GM23248 (cell line): ENCODE measurements at regions of chr1 and their contacts with region 1.

Region 1: DNA sequence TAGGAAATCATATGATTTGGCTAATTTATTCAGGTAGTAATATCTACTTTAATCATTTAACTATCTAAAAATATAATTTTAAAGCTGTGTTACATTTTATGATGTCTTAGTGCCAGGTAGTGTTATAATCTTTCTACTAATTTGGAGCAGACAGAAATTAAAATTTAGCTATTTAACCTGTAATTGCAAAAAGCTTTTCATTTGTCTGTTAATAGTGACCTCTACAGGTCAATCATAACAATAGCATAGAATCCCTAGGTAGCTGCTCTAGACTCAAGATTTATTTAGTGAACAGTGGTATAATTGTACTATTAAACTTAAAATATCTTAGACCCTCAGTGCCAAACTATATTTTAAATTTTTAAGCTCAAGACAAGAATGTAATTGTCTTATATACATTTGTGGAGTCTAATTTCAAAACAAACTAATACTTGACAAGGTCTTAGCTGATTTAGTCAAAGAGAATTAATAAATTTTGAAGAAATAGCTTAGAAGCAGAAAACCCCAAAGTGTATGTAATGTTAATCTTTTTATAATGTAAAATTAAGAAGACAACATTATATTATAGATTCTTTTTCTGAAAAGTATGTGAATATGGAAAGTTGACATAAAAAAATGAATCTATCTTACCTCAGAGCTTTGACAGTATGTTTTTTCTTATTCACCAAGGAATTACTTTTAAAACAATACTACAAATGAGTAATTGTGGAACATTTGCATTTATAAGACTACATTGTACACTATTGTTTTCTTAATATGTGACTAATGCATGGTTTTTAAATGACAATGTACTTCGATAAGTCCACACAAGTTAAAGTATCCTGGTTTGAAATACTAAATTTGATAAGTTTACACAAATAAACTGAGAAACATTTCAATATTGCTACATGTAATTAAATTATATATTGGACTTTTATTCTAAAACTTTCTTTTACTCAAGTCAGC is 64.1 kb upstream of the RNPC3 start:
- DNase-seq: peak; percentile 48
- H3K4me3 ChIP-seq: no peak overlapping the region
- H3K27ac ChIP-seq: no peak overlapping the region
- H3K4me1 ChIP-seq: no peaks in the 10 kb centered on the region
- H3K27me3 ChIP-seq: no peaks in the 10 kb centered on the region

Region 2: DNA sequence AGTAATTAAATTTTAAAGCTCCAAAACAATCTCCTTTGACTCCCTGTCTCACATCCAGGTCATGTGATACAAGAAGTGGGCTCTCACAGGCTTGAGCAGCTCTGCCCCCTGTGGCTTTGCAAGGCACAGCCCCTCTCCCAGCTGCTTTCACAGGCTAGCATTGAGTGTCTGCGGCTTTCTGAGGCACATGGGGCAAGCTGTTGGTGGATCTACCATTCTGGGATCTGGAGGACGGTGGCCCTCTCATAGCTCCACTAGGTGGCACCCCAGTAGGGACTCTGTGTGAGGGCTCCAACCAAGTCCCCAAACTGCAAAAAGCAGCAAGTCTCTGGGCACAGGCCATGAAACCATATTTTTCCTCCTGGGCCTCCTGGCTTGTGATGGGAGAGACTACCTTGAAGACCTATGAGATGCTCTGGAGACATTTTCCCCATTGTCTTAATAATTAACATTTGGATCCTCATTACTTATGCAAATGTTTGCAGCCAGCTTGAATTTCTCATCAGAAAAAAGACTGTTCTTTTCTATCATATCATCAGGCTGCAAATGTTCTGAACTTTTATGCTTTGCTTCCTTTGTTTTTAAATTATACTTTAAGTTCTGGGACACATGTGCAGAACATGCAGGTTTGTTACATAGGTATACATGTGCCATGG is 910.6 kb before region 1 on chr1:
- in situ Hi-C with region 1: loop called (anchors 25 kb)
- DNase-seq: peak; percentile 62
- H3K4me3 ChIP-seq: no peak overlapping the region
- H3K27ac ChIP-seq: no peak overlapping the region
- H3K4me1 ChIP-seq: no peaks in the 10 kb centered on the region
- H3K27me3 ChIP-seq: no peaks in the 10 kb centered on the region

Region 3: DNA sequence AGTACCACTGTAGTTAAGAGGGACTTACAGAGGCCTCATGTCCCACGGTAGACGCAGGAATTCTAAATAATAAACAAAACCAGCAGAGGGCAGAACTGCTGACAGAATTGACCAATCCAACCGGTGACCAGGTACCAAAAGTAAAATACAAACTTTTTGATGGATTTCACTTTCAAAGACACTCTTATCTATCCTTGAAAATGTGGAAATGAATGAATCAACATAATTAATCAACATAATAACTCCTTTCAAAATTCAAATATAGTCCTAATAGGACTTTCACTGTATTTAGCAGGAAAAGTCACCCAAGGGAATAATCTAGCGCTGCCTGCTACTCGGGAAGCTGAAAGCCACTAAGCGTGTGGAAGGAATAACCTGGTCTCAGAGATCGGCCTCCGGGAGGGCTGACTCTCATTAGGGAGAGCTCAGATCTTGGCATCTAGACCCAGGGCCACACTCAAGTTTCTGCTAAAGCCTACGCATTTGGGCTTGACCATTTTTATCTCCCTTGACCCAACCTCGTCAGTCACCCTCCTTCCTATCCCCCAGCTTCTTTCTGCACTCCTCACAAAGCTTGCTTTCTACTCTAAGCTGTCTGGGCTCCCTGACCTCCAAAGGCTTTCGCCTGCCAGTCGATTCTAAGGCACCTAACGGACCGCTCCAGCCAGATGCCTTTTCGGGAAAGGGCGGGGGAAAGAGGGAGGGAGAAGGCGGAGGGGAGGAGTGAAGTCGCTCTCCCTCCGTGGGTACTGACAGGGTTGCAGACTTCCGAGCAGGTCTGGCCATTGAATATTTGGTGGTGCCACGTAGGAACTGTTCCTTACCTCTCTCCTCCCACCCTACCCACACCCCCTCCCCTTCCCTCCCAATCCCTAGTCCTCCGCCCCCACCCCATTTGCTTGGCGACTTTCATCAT is 354.7 kb before region 1 on chr1:
- in situ Hi-C with region 1: loop called (anchors 25 kb)
- DNase-seq: peak; percentile 65
- H3K4me3 ChIP-seq: peak overlapping the region; percentile 70
- H3K27ac ChIP-seq: no peak overlapping the region
- H3K4me1 ChIP-seq: peaks cover 5% of the 10 kb centered on the region; the same call in 1 of the 2 replicates
- H3K27me3 ChIP-seq: 0 out of 2 replicates have a peak, but pooled peaks cover 12% of the 10 kb centered on the region